ENCODE measurements at regions of chr5 and their contacts with region 1.

Region 1: DNA sequence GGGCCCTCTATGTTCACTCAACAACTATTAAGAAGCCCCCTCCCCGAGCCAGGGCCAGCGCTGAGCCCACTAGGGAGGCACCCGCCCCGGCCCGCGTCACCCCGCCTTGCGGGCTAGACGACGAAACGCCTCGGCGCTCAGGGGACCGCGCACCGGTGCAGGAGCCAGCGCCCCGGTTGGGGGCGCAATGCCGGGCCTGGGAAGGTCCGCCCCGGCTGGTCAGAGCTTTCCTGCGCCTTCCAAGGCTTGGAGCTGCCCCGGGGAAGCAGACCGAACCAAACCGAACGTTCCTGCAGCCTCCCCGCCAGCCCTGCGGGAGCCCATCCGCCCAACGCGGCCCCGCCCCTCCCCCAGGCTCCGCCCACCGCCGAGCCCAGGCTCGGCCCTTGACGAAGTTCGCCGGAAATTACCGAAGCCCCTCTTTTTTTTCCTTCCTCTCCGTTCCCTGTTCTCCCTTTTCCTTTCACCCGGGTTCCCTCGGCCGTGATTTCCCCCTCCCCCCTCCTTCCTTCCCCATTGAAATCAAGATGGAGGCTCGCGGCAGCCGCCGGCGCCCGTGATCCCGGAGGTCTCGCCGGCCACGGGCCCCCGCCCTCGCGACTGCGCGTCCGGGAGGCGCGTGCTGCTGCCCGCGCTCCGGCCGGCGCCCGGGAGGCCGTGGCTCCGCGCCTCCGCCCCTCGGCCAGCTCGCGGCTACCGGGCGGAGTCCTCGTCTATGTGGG is at the start of gene TRIO:
- DNase-seq: peak; percentile 80 to 100
- H3K4me3 ChIP-seq: peak within 1 kb of the TSS; percentile 99
- H3K27ac ChIP-seq: peak within 1 kb of the TSS; percentile 78
- H3K4me1 ChIP-seq: peaks cover 40% of the 10 kb centered on the region
- H3K27me3 ChIP-seq: no peaks in the 10 kb centered on the region
- CTCF ChIP-seq: peak; percentile 68
- total RNA-seq, gene TRIO: 596 and 756 TPM in 2 replicates

Region 2: GRCh38 chr5:13843175-13843846 is 299.7 kb before region 1 on chr5:
- CTCF ChIA-PET with region 1: no interaction called
- POLR2A ChIA-PET with region 1: no interaction called
- intact Hi-C with region 1: no loop called
- DNase-seq: no peak
- H3K4me3 ChIP-seq: no peak overlapping the region
- H3K27ac ChIP-seq: no peak overlapping the region
- H3K4me1 ChIP-seq: no peaks in the 10 kb centered on the region
- H3K27me3 ChIP-seq: no peaks in the 10 kb centered on the region
- CTCF ChIP-seq: no peak

Region 3: DNA sequence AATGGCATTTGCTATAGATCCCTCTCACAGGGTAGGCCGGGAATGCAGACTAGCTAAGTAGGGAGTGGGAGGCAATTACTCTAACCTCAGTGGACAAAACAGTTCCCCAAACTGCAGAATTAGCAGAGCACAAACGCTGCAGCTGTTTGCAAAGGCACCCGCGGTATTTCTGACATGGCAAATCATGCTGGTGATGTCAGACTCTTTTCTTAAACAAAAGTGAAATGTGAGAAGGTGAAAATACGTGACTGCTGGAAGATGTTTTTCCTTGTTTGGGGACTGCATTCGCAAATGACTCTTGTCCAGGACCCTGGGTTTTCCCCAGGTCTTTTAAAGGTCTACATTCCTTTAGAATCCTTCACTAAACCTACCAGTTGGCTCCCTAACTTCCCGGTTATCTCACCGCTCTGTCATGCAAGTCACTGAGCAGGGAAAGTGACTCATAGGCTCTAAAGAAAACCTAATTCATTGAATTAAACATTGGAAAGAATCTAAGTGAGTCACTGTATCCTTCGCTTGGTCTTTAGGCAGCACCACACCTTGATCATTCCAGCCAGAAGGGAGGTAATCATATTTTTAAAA is 107.0 kb before region 1 on chr5:
- CTCF ChIA-PET with region 1: no interaction called
- POLR2A ChIA-PET with region 1: interaction called, 14 read pairs
- intact Hi-C with region 1: loop called (anchors 1 kb)
- DNase-seq: peak; percentile 94 to 100
- H3K4me3 ChIP-seq: peak overlapping the region; percentile 18; the same call in 1 of the 2 replicates
- H3K27ac ChIP-seq: peak overlapping the region; percentile 98
- H3K4me1 ChIP-seq: peaks cover 83% of the 10 kb centered on the region
- H3K27me3 ChIP-seq: no peaks in the 10 kb centered on the region
- CTCF ChIP-seq: no peak

Region 4: GRCh38 chr5:14165375-14166091 is 22.5 kb after region 1 on chr5:
- CTCF ChIA-PET with region 1: no interaction called
- POLR2A ChIA-PET with region 1: interaction called, 14 read pairs
- intact Hi-C with region 1: no loop called
- DNase-seq: peak; percentile 79 to 80
- H3K4me3 ChIP-seq: no peak overlapping the region
- H3K27ac ChIP-seq: peak overlapping the region; percentile 63
- H3K4me1 ChIP-seq: peaks cover 50% of the 10 kb centered on the region
- H3K27me3 ChIP-seq: no peaks in the 10 kb centered on the region
- CTCF ChIP-seq: no peak

Region 5: DNA sequence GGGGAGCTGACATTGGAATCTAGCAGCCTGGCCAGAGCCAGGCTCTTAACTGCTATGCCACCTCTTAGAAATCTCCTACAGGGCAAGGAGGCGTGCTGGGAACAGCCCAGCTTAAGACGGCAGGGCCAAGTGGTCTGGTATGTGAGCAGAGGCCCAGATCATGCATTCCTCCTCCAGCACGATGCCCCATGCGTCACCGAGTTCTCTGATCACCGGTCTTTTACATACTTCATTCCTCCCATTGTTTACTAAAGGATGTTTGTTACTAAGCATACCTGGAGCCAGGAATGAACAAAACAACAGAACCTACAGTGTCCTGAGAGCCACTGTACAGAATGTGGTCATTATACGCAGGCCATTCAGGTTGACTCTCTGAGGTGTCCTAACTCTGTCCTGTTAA is 73.9 kb after region 1 on chr5:
- CTCF ChIA-PET with region 1: interaction called, 4 read pairs
- POLR2A ChIA-PET with region 1: interaction called, 10 read pairs
- intact Hi-C with region 1: no loop called
- DNase-seq: no peak
- H3K4me3 ChIP-seq: no peak overlapping the region
- H3K27ac ChIP-seq: no peak overlapping the region
- H3K4me1 ChIP-seq: peaks cover 24% of the 10 kb centered on the region
- H3K27me3 ChIP-seq: no peaks in the 10 kb centered on the region
- CTCF ChIP-seq: no peak

Region 6: GRCh38 chr5:14264604-14265316 is 121.8 kb after region 1 on chr5:
- CTCF ChIA-PET with region 1: interaction called, 23 read pairs
- POLR2A ChIA-PET with region 1: interaction called, 20 read pairs
- intact Hi-C with region 1: loop called (anchors 1 kb)
- DNase-seq: peak; percentile 90 to 99
- H3K4me3 ChIP-seq: peak overlapping the region; percentile 52
- H3K27ac ChIP-seq: peak overlapping the region; percentile 88
- H3K4me1 ChIP-seq: peaks cover 62% of the 10 kb centered on the region
- H3K27me3 ChIP-seq: no peaks in the 10 kb centered on the region
- CTCF ChIP-seq: no peak

Measured in PC-9 (cell line).